SK-N-SH (cell line): ENCODE measurements at regions of chr3 and their contacts with region 1.

Region 1: DNA sequence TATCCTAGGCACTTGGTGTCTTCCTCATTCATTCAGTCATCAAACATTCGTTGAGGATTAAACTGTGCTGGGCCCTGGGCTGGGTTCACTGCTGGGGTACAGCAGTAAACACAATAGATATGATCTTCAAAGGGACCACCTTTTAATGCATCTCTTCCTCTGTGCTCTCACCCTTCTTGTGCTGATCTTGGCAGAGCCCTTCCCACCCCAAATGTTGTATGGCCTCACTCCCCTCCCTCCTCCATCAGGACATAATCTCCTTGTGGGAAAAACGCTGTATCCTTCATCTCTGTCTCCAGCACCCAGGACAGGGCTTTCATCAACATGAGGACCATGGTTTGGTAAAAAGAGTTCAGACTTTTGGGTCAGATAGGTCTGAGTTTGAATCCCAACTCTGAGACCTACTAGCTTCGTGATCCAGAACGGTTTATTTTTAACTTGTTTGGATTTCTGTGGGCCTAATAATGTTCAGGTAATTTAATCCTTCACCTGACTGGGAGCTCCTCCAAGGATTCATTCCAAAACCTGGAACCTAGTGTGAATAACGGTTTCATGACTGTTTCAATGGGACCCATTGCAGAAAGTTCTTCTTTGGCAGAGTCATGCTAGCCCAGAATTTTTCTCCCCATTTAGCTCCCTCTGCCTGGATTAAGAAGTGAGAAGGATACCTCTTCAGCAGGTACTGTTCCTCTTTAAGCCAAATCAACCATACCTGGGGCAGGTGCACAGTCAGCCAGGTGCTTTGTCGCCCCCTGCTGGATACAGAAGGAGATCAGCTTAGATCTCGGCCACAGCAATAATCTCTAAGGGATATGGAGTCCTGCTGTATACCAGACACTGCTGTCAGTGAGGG is 5.2 kb upstream of the WNT7A start:
- DNase-seq: peak; percentile 72
- H3K4me3 ChIP-seq: peak overlapping the region in 1 of 2 experiments; percentile 28; a peak in 1 of 4 replicates
- H3K27ac ChIP-seq: no peak overlapping the region
- H3K4me1 ChIP-seq: peaks cover 0 to 4% of the 10 kb centered on the region in 2 experiments; a peak in 1 of 4 replicates
- H3K27me3 ChIP-seq: peaks cover 11% of the 10 kb centered on the region; the same call in 1 of the 2 replicates
- CTCF ChIP-seq: peak; percentile 66
- EP300 ChIP-seq: no peak
- RAD21 ChIP-seq: peak; percentile 72

Region 2: GRCh38 chr3:13317596-13318320 is 567.3 kb before region 1 on chr3:
- CTCF ChIA-PET with region 1: no interaction called
- POLR2A ChIA-PET with region 1: no interaction called
- DNase-seq: no peak
- H3K4me3 ChIP-seq: no peak overlapping the region
- H3K27ac ChIP-seq: no peak overlapping the region
- H3K4me1 ChIP-seq: no peaks in the 10 kb centered on the region
- H3K27me3 ChIP-seq: no peaks in the 10 kb centered on the region
- CTCF ChIP-seq: no peak
- EP300 ChIP-seq: no peak
- RAD21 ChIP-seq: no peak

Region 3: DNA sequence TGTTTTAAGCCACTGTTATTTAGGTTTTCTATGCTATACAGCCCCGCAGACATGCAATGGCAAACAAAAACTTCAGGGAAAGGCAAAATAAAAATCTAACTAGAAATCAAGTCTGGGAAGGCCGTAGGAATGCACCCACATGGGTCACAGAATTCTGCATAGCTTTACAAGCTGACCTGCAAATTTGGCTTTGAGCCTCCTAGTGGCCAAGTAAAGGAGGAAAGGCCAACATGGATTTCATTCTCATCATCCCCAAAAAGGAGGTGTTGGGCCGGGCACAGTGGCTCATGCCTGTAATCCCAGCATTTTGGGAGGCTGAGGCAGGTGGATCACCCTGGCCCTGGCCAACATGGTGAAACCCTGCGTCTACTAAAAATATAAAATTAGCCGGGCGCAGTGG is 211.9 kb before region 1 on chr3:
- CTCF ChIA-PET with region 1: interaction called, 28 read pairs
- POLR2A ChIA-PET with region 1: no interaction called
- DNase-seq: no peak
- H3K4me3 ChIP-seq: no peak overlapping the region
- H3K27ac ChIP-seq: no peak overlapping the region
- H3K4me1 ChIP-seq: no peaks in the 10 kb centered on the region
- H3K27me3 ChIP-seq: no peaks in the 10 kb centered on the region
- CTCF ChIP-seq: peak; percentile 34
- EP300 ChIP-seq: no peak
- RAD21 ChIP-seq: no peak

Region 4: DNA sequence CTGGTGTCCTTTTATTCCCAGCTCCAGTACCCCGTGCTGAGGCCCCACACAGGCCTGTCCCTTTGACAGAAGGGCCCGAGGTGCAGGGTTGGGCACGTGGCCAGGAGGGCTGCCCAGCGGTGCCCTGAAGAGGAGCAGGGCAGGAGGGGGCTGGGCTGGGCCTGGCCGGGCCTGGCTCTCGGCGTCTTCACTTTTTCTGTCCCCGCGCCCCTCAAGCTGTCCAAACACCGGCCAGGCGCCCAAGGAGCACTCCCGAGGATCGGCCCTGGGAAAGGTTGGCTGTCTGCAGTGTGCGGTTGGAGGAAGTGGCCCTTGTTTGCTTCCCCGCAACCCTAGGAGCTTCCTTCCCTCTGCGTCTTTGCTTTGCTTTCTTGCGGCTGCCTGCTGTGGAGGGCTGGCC is 89.3 kb before region 1 on chr3:
- CTCF ChIA-PET with region 1: interaction called, 12 read pairs
- POLR2A ChIA-PET with region 1: no interaction called
- DNase-seq: no peak
- H3K4me3 ChIP-seq: no peak overlapping the region
- H3K27ac ChIP-seq: no peak overlapping the region
- H3K4me1 ChIP-seq: peaks cover 0 to 22% of the 10 kb centered on the region in 2 experiments; a peak in 2 of 4 replicates
- H3K27me3 ChIP-seq: no peaks in the 10 kb centered on the region
- CTCF ChIP-seq: no peak
- EP300 ChIP-seq: no peak
- RAD21 ChIP-seq: no peak

Region 5: DNA sequence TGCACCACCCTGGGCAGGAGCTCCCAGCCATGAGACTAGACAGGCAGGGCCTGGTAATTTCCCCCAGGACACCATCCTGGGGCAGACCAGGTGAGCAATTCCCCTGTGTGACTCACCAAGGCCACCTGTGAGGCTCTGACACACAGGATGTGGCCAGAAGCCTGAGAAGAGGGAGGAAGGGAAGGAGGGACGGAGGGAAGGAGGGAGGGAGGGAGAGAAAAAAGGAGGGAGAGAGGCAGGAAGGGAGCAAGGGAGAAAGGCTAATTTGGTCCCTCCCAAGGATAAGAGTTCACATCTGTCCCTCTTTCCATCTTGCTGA is 31.1 kb before region 1 on chr3:
- CTCF ChIA-PET with region 1: interaction called, 10 read pairs
- POLR2A ChIA-PET with region 1: no interaction called
- DNase-seq: no peak
- H3K4me3 ChIP-seq: no peak overlapping the region
- H3K27ac ChIP-seq: no peak overlapping the region
- H3K4me1 ChIP-seq: no peaks in the 10 kb centered on the region; a peak in 1 of 4 replicates
- H3K27me3 ChIP-seq: no peaks in the 10 kb centered on the region
- CTCF ChIP-seq: no peak
- EP300 ChIP-seq: no peak
- RAD21 ChIP-seq: no peak

Region 6: GRCh38 chr3:13872451-13872850 is 12.6 kb before region 1 on chr3:
- CTCF ChIA-PET with region 1: interaction called, 28 read pairs
- POLR2A ChIA-PET with region 1: no interaction called
- DNase-seq: no peak
- H3K4me3 ChIP-seq: no peak overlapping the region
- H3K27ac ChIP-seq: no peak overlapping the region
- H3K4me1 ChIP-seq: no peaks in the 10 kb centered on the region
- H3K27me3 ChIP-seq: peaks cover 7% of the 10 kb centered on the region; the same call in 1 of the 2 replicates
- CTCF ChIP-seq: no peak
- EP300 ChIP-seq: no peak
- RAD21 ChIP-seq: no peak